Transverse colon (tissue), 4 donors: ENCODE measurements at regions of chr18 and their contacts with region 1.

Region 1: GRCh38 chr18:75962036-75962572 is 532.9 kb downstream of the ZNF516 start:
- DNase-seq: no peak
- H3K4me3 ChIP-seq: no peak overlapping the region
- H3K27ac ChIP-seq: no peak overlapping the region
- H3K4me1 ChIP-seq: no peaks in the 10 kb centered on the region
- H3K27me3 ChIP-seq: no peaks in the 10 kb centered on the region
- CTCF ChIP-seq: no peak
- EP300 ChIP-seq: no peak
- POLR2A ChIP-seq: no peak

Region 2: GRCh38 chr18:75790796-75791195 is 171.3 kb before region 1 on chr18:
- in situ Hi-C with region 1: no loop called
- intact Hi-C with region 1: no loop called
- DNase-seq: no peak
- H3K4me3 ChIP-seq: no peak overlapping the region
- H3K27ac ChIP-seq: no peak overlapping the region
- H3K4me1 ChIP-seq: no peaks in the 10 kb centered on the region
- H3K27me3 ChIP-seq: no peaks in the 10 kb centered on the region
- CTCF ChIP-seq: no peak
- EP300 ChIP-seq: no peak
- POLR2A ChIP-seq: no peak

Region 3: DNA sequence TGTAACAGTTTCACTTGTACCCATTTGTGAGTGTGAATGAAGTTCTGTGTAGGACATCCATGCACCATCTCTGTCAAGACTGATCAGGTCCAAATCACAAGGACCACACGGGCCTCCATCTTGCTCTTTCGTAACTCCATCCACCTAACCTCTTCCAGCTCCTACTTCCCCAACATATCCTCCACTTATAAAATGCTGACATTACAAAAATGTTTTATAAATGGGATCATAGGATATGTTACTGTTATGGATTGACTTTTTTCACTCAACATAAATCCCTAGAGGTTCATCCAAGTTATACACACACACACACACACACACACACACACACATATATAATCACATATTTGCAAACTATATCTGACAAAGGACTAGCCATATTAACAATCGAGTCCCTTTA is 56.1 kb after region 1 on chr18:
- in situ Hi-C with region 1: loop called in 1 of 4 experiments (anchors 10 kb)
- intact Hi-C with region 1: no loop called
- DNase-seq: no peak
- H3K4me3 ChIP-seq: no peak overlapping the region
- H3K27ac ChIP-seq: no peak overlapping the region
- H3K4me1 ChIP-seq: no peaks in the 10 kb centered on the region
- H3K27me3 ChIP-seq: no peaks in the 10 kb centered on the region
- CTCF ChIP-seq: no peak
- EP300 ChIP-seq: no peak
- POLR2A ChIP-seq: no peak

Region 4: GRCh38 chr18:76126327-76126726 is 164.2 kb after region 1 on chr18:
- in situ Hi-C with region 1: no loop called
- intact Hi-C with region 1: no loop called
- DNase-seq: no peak
- H3K4me3 ChIP-seq: no peak overlapping the region
- H3K27ac ChIP-seq: no peak overlapping the region
- H3K4me1 ChIP-seq: no peaks in the 10 kb centered on the region
- H3K27me3 ChIP-seq: no peaks in the 10 kb centered on the region
- CTCF ChIP-seq: no peak
- EP300 ChIP-seq: no peak
- POLR2A ChIP-seq: no peak

Region 5: GRCh38 chr18:76922107-76922506 is 960.0 kb after region 1 on chr18:
- in situ Hi-C with region 1: no loop called
- intact Hi-C with region 1: no loop called
- DNase-seq: peak; percentile 64
- H3K4me3 ChIP-seq: no peak overlapping the region
- H3K27ac ChIP-seq: no peak overlapping the region
- H3K4me1 ChIP-seq: peaks cover 0 to 8% (median 0%) of the 10 kb centered on the region in 4 donors
- H3K27me3 ChIP-seq: no peaks in the 10 kb centered on the region
- CTCF ChIP-seq: peak; percentile 42 to 77 (median 61)
- EP300 ChIP-seq: no peak
- POLR2A ChIP-seq: no peak